ENCODE measurements at regions of chr5 and their contacts with region 1.

Region 1: DNA sequence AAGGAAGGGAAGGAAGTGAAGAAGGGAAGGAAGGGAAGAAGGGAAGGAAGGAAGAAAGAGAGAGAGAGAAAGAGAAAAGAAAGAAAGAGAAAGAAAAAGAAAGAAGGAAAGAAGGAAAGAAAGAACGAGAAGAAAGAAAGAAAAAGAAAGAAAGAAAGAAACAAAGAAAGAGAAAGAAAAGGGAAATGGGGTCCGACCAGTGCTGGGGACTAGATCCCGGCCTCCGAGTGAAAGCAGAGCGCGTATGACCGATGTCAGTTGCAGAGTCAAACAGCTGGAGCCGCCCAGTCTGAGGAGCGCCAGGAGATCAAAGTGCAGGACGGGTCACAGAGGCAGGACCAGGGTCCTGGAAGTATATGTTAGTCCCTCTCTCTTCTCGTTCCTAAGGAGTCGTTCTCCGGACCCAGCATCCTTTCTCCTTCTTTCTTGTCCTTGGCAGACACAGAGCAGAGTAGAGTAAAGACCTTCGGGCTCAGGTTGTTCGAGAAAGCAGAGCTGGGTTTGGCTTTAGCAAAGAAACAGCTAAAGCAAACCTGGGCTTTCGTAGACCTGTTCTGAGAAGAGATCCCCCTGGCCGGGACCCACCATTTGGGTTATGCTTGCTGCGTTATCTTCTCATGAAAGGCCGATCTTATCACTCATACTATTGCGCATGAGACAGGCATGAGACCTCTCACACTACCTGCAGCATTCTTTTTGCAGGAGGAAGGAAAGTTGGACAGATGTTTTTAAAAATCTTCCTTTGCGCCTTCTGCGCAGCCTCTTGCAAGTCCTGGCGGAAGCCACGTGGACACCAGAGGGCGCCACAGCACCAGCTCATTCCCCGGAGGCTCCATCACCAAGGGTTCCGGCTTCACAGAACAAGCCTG is 305.2 kb upstream of the MSX2 start:
- DNase-seq: peak; percentile 92 to 98
- ATAC-seq: peak; percentile 91
- H3K4me3 ChIP-seq: peak overlapping the region; percentile 10 to 21
- H3K27ac ChIP-seq: no peak overlapping the region
- H3K4me1 ChIP-seq: no peaks in the 10 kb centered on the region
- H3K27me3 ChIP-seq: no peaks in the 10 kb centered on the region

Region 2: DNA sequence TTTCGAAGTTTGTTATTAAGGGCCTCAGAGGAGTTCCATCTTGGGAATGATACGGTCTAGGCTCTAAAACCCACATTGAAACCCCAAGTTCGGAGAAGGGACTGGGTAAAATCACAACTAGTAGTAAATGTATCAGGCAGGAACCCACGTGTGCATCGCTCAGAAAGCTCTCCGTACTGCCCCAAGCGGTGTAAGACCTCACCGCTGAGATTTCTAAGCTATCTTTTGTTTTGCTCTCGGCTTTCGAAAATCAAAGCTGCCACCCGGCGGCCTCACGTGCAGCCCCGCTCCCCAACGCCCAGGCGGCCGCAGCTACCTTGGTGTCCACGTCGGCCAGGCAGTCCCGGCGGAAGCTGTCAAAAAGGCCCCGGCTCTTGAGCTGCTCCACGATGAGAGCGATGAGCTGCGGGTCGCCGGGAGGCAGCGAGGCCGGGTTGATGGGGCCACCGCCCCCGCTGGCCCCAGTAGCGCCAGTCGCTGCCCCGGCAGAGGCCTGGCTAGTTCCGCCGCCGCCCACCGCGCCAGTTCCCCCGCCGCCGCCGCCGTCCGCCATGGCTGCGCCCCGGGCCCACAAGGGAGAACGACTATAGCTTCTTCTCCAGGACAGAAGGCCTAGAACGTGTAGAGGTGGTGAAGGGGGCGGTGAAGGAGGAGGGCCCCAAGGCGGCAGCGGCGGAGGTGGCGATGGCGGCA is 803.1 kb before region 1 on chr5:
- intact Hi-C with region 1: loop called in 1 of 2 experiments (anchors 10 kb)
- DNase-seq: peak; percentile 63 to 82
- ATAC-seq: peak; percentile 79
- H3K4me3 ChIP-seq: peak overlapping the region; percentile 86 to 99
- H3K27ac ChIP-seq: peak overlapping the region; percentile 60 to 91
- H3K4me1 ChIP-seq: no peaks in the 10 kb centered on the region
- H3K27me3 ChIP-seq: no peaks in the 10 kb centered on the region

Region 3: DNA sequence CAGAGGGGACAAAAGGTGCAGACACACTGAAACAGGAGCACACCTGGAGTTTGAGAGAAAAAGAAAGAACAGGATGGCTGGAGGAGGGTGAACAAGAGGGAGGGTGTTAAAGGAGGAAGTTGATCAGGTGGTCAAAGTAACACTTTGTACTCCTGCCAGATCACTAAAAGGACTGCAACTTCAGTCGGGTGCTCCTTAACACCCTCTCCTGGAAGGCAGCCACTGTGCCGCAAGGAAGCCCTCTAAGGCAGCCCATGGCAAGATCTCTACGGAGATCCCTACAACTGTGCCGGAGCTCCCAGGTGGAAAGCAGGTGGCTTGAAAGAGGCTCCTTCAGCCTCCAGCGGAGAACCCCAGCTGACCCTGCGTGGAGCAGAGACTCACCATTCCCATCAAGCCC is 180.8 kb after region 1 on chr5:
- intact Hi-C with region 1: no loop called
- DNase-seq: no peak
- ATAC-seq: no peak
- H3K4me3 ChIP-seq: no peak overlapping the region
- H3K27ac ChIP-seq: no peak overlapping the region
- H3K4me1 ChIP-seq: no peaks in the 10 kb centered on the region
- H3K27me3 ChIP-seq: no peaks in the 10 kb centered on the region

Region 4: GRCh38 chr5:174724491-174725260 is 305.5 kb after region 1 on chr5 and contains the start of gene MSX2:
- intact Hi-C with region 1: loop called (anchors 5 kb)
- DNase-seq: peak; percentile 91 to 96
- ATAC-seq: peak; percentile 95
- H3K4me3 ChIP-seq: peak within 1 kb of the TSS; percentile 21 to 61
- H3K27ac ChIP-seq: no peak within 1 kb of the TSS
- H3K4me1 ChIP-seq: no peaks in the 10 kb centered on the region
- H3K27me3 ChIP-seq: peaks cover 0 to 3% of the 10 kb centered on the region in 2 donors
- total RNA-seq, gene MSX2: 1.3 to 2.9 TPM

Region 5: DNA sequence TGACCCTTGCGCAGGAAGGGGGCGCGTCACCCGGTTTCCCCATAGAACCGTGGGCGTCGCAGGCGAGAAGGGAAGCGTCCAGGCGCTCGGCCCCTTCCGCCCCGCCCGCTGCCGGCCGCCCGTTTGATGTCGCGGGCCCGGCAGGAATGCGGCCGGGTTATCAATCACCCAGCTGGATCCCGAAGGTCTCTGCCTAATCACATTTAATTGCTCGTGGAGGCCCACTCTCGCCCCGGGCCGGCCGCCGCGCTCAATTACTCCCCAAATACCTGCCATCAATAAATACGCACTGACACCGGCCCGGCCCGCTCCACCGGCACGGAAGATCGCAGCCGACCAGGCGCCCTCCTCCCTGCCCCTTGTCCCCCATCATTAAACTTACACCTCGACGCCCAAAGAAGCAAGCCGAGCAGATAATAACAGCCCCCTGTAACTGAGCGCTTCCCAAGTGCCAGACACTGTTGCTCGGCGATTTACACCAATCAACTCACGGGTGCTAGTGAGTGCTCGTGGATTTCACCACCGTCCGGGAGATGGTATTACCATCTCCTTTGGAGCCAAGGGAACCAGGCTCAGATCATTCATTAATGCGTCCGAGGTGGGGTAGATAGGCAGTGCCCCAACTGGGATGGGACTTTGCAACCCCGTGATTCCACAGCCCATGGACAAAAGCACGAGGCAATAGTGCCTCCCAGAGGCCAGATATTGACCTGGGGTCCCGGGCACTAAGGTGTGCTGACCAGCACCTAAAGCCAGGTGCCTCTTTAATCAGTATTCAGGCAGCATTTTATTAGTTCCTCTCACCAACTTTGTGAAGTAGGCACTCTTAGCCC is 316.6 kb after region 1 on chr5:
- intact Hi-C with region 1: no loop called
- DNase-seq: no peak
- ATAC-seq: no peak
- H3K4me3 ChIP-seq: no peak overlapping the region
- H3K27ac ChIP-seq: no peak overlapping the region
- H3K4me1 ChIP-seq: peaks cover 0 to 3% of the 10 kb centered on the region in 2 donors
- H3K27me3 ChIP-seq: no peaks in the 10 kb centered on the region

Region 6: DNA sequence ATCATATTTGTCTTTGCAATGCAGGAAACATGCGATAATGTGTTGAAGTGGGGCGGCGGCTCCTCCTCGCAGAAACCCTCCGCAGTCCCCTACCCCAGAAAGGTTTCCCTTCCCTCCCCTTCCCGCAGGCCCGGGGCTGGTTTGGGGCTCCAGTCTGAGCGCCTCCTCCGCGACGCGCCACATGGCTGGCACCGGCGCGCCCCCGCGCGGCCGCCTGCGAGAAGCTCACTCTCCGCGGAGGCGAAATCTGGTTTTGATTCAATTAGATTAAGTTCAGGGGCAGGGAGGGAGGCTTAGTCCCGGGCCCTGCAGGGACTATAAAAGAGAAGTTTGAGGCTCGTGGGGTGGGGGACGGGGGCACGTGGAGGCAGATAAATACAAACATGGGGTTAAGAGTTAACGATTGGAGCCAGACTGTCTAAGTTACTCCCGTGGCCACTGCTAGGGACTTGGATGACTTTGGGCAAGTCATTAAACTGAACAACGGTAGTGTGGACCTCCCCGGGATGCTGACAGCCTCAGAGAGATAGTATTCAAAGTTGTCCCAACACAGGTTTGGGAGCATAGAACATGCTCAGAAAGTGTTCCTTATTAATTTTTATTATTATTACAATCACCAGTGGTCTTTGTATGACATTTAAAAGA is 374.6 kb after region 1 on chr5:
- intact Hi-C with region 1: loop called (anchors 1 to 2 kb)
- DNase-seq: peak; percentile 56 to 87
- ATAC-seq: peak; percentile 84
- H3K4me3 ChIP-seq: no peak overlapping the region
- H3K27ac ChIP-seq: no peak overlapping the region
- H3K4me1 ChIP-seq: no peaks in the 10 kb centered on the region
- H3K27me3 ChIP-seq: no peaks in the 10 kb centered on the region

Region 7: GRCh38 chr5:174935854-174936474 is 516.8 kb after region 1 on chr5:
- intact Hi-C with region 1: loop called (anchors 5 kb)
- DNase-seq: peak in 1 of 2 donors; percentile 58
- ATAC-seq: no peak
- H3K4me3 ChIP-seq: no peak overlapping the region
- H3K27ac ChIP-seq: no peak overlapping the region
- H3K4me1 ChIP-seq: no peaks in the 10 kb centered on the region
- H3K27me3 ChIP-seq: no peaks in the 10 kb centered on the region